RWPE1 (cell line): ENCODE measurements at regions of chr5 and their contacts with region 1.

Region 1: DNA sequence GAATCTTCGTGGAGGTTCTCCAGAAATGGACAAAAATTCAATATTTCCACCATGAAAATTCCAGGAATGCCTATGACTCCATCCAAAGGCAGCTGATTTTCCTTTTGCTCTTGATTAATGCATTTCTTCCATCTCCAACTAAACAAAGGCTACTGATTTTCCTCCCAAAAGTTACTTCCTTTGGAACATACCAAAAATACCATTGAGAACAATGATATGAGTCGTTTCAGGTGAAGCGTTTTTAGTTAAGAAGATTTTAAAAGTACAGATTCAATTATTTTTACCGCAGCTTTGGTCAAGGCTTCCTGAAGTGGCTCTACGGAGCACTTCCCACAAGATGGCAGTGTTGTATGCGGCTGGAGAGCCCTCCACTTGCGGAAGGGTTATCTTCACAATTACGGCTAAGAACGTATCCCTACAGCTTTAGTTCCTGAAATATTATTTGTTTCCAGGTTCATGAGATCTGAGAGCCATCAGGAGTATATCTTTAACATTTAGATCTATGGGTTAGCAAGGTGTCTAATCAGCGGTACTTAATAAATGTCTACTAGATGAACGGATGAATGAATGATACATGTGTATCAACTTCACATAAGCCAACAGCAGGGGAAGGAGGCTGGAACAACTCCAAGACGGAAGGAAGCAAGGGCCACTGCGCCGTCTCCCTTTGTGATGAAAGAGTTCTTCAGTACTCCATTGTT is 35.9 kb upstream of the ARSB start:
- DNase-seq: peak; percentile 60
- H3K27ac ChIP-seq: no peak overlapping the region
- CTCF ChIP-seq: peak; percentile 95

Region 2: DNA sequence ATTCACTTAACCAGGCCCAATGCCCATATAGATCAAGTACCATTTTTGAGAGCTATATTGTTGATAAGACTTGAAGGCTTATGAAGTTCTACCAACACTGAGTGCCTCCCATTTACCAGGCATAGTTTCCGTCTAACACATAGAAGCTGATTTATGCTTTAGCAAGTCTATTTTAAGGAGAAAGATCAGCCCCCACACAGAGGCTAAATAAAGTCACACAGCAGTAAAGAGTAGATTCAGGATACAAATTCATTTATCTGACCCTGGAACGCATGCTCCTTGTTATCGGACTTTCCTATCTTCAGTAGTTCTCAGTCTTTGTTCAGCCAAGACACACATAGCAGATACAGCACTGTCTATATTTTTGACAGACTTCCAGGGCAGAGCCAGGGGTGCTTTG is 14.2 kb after region 1 on chr5:
- CTCF ChIA-PET with region 1: interaction called, 20 read pairs
- POLR2A ChIA-PET with region 1: no interaction called
- DNase-seq: no peak
- H3K27ac ChIP-seq: no peak overlapping the region
- CTCF ChIP-seq: no peak

Region 3: DNA sequence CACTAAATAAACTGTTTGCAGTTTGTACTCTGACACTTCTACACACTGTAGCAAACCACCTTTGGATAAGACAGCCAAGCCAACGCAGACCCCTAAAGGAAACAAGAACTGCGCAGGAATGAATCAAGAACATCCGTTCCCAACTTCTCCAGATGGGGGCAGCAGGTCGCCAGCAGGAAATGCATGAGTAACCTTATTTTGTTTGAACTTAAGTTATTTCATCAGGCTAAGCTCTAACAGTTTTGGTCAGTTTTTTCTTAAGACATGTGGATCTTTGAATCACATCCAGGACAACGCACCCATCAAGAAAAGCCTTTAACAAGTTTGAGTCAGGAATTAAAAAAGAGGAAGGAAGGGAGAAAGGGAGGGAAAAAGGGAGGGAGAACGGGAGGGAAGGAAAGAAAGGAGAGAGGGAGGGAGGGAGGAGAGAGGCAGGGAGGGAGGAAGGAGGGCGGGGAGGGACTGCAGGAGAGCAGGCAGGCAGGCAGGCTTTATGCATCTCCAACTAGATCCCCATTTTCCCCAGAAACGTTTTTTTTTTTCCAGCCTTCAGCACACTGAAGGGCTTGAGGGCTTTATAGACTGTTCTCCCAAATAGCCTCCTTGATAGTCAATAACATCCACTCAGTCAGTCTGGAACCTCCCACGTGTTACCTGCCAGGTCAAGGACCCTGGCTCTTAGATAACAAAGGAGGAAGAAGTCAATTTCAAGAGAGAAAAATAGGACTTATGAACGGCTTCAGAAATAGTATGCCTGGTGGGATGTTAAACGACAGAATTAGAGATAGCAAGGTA is 112.8 kb after region 1 on chr5:
- CTCF ChIA-PET with region 1: interaction called, 115 read pairs
- POLR2A ChIA-PET with region 1: no interaction called
- DNase-seq: peak; percentile 72
- H3K27ac ChIP-seq: no peak overlapping the region
- CTCF ChIP-seq: peak; percentile 91

Region 4: GRCh38 chr5:79420248-79420647 is 399.2 kb after region 1 on chr5:
- CTCF ChIA-PET with region 1: interaction called, 10 read pairs
- POLR2A ChIA-PET with region 1: no interaction called
- DNase-seq: no peak
- H3K27ac ChIP-seq: no peak overlapping the region
- CTCF ChIP-seq: no peak

Region 5: DNA sequence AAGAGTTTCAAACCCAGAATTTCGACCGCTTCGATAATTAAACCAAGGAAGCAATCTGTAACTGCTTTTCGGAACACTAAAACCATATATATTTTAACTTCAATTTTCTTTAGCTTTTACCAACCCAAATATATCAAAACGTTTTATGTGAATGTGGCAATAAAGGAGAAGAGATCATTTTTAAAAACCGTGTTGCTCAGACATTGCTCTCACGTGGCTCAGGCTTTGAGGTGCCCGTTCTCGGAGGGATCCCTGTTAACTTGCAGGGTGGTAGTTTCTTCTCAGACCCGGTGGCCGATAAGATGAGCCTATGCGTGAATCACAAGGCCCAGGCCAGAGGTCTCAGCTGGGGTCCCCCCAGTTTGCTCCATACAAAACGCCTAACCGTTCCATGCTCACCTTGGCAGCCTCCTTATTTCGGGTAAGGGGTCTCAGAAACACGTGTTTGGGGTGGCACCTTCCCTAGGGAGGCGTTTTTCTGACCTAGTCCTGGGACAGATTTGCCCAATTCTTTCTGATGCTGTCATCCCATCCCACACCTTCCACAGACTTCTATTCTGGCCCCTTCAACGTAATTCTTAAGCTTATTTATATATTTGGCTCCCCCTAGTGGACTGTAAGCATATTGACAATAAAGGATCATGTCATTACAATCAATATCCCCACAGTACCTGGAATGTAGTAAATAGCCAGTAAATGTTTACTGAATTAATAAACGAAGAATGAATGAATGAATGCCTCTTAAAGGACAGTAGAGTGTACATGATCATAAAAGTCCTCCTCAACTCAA is 1062.3 kb after region 1 on chr5:
- CTCF ChIA-PET with region 1: interaction called, 13 read pairs
- POLR2A ChIA-PET with region 1: no interaction called
- DNase-seq: peak; percentile 87
- H3K27ac ChIP-seq: peak overlapping the region; percentile 35; the same call in 1 of the 2 replicates
- CTCF ChIP-seq: peak; percentile 63